ENCODE measurements at regions of chr2 and their contacts with region 1.

Region 1: GRCh38 chr2:241379481-241380480 is 23.7 kb downstream of the FARP2 start:
- DNase-seq: no peak
- H3K4me3 ChIP-seq: no peak overlapping the region
- H3K27ac ChIP-seq: peak overlapping the region; percentile 43 to 69
- H3K4me1 ChIP-seq: peaks cover 0 to 89% (median 69%) of the 10 kb centered on the region in 4 donors
- H3K27me3 ChIP-seq: no peaks in the 10 kb centered on the region
- CTCF ChIP-seq: no peak

Region 2: DNA sequence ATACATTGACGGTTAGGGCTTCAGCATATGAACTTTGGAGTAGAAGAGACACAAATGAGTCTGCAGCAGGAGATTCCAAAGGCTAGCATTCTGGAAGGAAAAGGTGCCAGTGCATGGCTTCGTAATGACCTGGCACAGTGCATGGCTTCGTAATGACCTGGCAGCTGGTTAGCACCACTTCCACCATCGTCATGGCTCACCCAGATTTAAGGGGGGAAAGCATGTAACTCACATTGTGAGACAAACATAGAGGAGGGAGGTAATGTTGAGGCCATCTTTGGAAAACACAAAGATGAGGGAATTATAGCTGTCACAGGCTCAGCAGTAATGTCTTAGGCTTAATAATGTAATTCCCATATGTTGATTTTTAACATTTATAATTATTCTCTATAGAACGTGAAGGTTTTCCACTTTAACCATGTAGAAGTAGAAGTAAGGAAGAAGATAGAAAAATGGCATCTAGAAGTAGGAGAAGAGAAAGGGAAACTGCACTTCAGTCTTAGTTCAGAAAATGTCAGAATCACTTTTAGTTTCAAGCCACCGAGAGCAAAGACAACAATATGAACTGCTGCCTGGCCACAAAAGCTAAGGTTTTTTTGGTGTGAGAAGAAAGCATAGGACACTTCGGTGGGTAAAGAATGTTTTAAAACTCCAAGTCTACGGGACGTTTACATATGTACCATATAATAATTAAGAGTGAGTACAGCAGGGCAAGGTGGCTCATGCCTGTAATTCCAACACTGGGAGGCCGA is 135.4 kb after region 1 on chr2:
- intact Hi-C with region 1: loop called (anchors 10 kb)
- DNase-seq: no peak
- H3K4me3 ChIP-seq: no peak overlapping the region
- H3K27ac ChIP-seq: no peak overlapping the region
- H3K4me1 ChIP-seq: no peaks in the 10 kb centered on the region
- H3K27me3 ChIP-seq: peaks cover 0 to 9% of the 10 kb centered on the region in 2 donors
- CTCF ChIP-seq: no peak

Measured in tibial artery (tissue), 4 donors.